Testis (tissue), 5 donors: ENCODE measurements at regions of chr1 and their contacts with region 1.

Region 1: DNA sequence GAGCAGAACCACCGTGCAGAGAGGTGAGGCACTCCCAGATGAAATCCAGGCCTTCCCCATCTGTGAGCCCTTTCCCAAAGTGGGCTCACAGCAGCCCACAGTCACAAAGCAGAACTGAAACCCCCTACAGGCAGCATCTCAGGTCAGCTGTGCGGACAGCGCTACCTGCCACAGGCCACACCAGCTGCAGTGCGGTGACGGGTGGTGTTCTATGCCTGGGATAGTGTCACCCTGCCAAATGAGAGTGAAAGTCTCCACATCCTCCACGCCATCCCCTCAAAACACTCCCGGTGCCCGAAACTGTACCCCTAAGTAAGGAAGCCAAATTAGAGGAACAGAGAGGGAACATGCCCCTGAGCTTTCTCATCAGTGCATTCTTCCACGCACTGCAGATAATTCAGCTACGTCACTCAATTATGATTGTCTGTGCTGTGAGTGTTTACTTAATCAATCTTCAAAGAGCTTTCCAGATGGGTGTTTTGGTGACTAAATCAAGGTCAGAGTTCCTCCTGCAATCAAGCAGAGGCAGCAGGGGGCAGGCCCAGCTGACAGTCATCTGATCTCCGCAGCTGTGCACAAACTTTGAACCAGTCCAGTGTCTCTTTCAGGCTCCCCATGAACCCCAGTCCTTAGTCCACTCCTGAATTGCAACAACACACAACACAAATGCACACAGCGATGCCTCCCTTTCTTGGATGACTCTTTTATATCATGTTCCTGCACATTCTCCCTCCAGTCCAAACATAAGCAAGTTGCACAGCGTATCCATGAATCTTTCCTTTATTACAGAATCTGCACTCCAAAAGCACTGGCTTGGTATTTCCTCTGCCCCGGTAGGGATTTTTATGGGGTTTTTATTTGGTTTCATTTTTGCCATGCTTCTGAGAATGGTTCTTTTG is 150.0 kb downstream of the TOMM20 start:
- DNase-seq: peak; percentile 74
- H3K4me3 ChIP-seq: no peak overlapping the region
- H3K27ac ChIP-seq: peak overlapping the region; percentile 64 to 90
- H3K4me1 ChIP-seq: peaks cover 41% of the 10 kb centered on the region
- H3K27me3 ChIP-seq: no peaks in the 10 kb centered on the region
- CTCF ChIP-seq: no peak
- POLR2A ChIP-seq: no peak

Region 2: GRCh38 chr1:235075188-235075926 is 96.7 kb after region 1 on chr1:
- intact Hi-C with region 1: loop called (anchors 10 kb)
- DNase-seq: no peak
- H3K4me3 ChIP-seq: no peak overlapping the region
- H3K27ac ChIP-seq: peak overlapping the region; percentile 44 to 50
- H3K4me1 ChIP-seq: peaks cover 34% of the 10 kb centered on the region
- H3K27me3 ChIP-seq: no peaks in the 10 kb centered on the region
- CTCF ChIP-seq: no peak
- POLR2A ChIP-seq: no peak